ENCODE measurements at regions of chr20 and their contacts with region 1.

Region 1: DNA sequence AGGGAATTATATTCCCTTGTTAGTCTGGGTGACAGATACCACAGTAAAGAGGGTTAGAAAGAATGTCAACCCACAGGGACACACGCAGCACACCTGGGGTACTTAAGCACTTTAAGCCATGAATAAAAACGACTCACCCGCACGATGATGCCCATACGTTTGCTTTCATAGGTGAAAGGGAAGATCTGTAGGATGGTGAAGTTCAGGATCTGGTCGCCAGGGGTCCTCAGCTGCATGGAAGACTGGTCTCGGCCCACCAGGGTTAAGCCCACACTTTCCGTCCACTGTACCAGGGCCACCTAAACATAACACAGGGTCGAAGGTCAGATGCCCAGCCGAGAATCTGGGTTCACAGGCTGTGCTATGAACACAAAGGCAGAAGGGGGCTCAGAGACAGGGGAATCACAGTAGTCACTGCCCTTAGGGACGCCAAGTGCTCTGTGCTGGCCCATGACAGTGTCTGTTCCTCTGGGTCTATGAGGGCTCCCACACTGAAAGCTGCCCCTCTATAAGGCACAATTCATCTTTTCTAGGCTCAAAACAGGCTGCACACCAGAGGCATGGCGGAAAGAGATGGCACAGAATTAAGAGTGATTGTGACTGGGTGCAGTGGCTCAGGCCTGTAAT is 96.8 kb upstream of the NFATC2 start:
- DNase-seq: peak; percentile 86
- H3K4me3 Mint-ChIP-seq: no peak overlapping the region
- H3K27ac Mint-ChIP-seq: no peak overlapping the region
- H3K4me1 Mint-ChIP-seq: peaks cover 9% of the 10 kb centered on the region
- H3K27me3 Mint-ChIP-seq: no peaks in the 10 kb centered on the region
- CTCF ChIP-seq: peak; percentile 98

Region 2: GRCh38 chr20:51573576-51574243 is 65.6 kb before region 1 on chr20:
- CTCF ChIA-PET with region 1: no interaction called
- intact Hi-C with region 1: no loop called
- DNase-seq: no peak
- H3K4me3 Mint-ChIP-seq: no peak overlapping the region
- H3K27ac Mint-ChIP-seq: no peak overlapping the region
- H3K4me1 Mint-ChIP-seq: peaks cover 13% of the 10 kb centered on the region
- H3K27me3 Mint-ChIP-seq: peaks cover 47% of the 10 kb centered on the region
- CTCF ChIP-seq: no peak

Region 3: DNA sequence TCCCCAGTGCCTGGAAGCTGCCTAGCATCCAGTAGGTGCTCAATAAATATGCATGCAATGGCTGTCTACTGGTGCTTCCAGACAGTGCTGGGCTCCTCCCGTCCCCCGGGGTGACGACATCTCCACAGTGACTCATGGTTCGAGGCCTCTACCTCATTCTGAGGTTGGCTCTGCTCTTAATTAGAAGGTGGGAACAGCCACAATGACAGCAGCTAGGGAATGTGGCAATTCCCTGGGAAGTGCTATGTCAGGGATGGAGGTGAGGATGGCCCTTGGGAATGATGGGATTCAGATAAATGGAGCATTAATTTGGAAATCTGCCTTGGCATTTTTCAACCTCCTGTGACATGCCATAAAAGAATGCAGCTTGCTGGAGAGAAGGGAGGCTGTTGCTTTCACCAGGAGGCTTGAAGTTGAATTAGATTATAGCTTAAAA is 53.3 kb before region 1 on chr20:
- CTCF ChIA-PET with region 1: no interaction called
- intact Hi-C with region 1: no loop called
- DNase-seq: no peak
- H3K4me3 Mint-ChIP-seq: no peak overlapping the region
- H3K27ac Mint-ChIP-seq: no peak overlapping the region
- H3K4me1 Mint-ChIP-seq: no peaks in the 10 kb centered on the region
- H3K27me3 Mint-ChIP-seq: peaks cover 25% of the 10 kb centered on the region
- CTCF ChIP-seq: no peak

Region 4: DNA sequence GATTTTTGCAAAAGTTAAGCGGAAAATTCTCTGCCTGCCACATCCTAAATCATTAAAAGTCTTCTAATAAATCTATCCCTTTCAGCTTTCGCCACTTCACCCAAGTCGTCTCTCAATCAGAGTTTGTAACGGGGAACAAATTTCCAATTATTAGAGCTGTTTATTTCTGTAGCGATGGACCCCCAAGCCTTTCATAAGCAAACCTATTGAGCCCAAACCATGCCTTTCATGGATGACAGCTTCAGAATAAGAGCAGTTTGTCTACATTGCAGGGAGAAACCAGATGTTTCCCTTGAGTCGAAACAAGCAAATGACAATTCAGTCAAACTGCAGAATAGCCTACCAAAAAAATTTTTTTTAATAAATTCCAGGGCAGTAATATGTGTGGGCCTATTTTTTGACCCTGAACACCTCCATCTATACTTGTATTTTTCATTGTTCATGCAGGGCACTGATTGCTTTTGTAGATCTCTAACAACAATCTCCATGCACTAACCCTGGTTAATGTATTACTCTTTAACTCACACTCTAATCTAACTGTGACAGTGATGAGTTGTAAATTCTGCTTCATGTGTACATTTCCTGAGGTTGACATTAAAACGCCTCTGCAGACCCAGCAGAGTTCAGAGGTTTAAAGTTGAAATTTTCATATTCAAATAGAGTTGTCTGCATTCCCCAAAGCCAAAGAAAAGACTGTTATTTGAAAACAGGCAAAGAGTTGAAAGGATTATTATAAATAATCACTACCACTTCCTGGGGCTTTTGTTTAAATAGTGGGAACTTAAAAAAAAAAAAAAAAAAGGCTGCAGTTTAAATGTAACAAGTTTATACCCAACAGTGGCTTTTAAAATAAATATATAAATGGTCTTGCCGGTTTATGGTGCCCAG is 64.3 kb after region 1 on chr20:
- CTCF ChIA-PET with region 1: interaction called, 4 read pairs
- intact Hi-C with region 1: loop called (anchors 5 kb)
- DNase-seq: no peak
- H3K4me3 Mint-ChIP-seq: peak overlapping the region; percentile 37
- H3K27ac Mint-ChIP-seq: peak overlapping the region; percentile 67
- H3K4me1 Mint-ChIP-seq: peaks cover 65% of the 10 kb centered on the region
- H3K27me3 Mint-ChIP-seq: no peaks in the 10 kb centered on the region
- CTCF ChIP-seq: no peak

Region 5: DNA sequence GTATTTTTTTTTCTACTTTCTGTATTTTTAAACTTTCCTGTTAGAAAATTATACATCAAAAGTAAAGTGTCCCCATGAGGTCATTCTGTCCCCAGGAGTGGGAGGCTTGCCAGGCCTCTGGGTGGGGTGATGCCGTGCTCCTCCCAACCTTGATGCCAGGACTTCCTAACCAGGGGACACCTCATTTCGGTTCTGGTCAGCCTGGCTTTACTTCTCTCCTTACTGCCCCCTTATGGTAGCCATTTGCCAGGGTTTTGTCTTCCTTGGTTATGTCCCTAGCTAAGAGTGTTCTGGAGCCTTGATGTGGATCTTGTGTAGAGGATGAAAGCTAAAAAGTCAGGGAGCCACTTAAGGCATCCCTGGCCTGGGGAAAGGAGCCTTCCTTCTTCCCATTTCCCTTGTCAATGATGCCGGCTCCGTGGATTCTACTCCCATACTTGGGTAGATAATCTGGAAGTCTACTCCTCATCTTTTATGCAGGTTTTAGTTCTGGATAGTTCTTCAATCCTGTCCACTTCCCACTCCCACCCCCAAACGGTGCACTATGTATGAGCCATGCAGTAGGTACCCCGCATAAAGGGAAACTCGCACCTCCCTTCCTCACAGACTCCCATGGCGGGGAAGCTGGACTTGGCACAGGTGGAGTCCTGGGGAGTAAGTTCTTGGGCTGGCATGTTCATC is 327.1 kb after region 1 on chr20:
- CTCF ChIA-PET with region 1: interaction called, 3 read pairs
- intact Hi-C with region 1: loop called (anchors 1 kb)
- DNase-seq: peak; percentile 83
- H3K4me3 Mint-ChIP-seq: no peak overlapping the region
- H3K27ac Mint-ChIP-seq: no peak overlapping the region
- H3K4me1 Mint-ChIP-seq: peaks cover under 1% of the 10 kb centered on the region
- H3K27me3 Mint-ChIP-seq: no peaks in the 10 kb centered on the region
- CTCF ChIP-seq: peak; percentile 66

Measured in Calu3 (cell line).